ENCODE measurements at regions of chr19 and their contacts with region 1.

Region 1: DNA sequence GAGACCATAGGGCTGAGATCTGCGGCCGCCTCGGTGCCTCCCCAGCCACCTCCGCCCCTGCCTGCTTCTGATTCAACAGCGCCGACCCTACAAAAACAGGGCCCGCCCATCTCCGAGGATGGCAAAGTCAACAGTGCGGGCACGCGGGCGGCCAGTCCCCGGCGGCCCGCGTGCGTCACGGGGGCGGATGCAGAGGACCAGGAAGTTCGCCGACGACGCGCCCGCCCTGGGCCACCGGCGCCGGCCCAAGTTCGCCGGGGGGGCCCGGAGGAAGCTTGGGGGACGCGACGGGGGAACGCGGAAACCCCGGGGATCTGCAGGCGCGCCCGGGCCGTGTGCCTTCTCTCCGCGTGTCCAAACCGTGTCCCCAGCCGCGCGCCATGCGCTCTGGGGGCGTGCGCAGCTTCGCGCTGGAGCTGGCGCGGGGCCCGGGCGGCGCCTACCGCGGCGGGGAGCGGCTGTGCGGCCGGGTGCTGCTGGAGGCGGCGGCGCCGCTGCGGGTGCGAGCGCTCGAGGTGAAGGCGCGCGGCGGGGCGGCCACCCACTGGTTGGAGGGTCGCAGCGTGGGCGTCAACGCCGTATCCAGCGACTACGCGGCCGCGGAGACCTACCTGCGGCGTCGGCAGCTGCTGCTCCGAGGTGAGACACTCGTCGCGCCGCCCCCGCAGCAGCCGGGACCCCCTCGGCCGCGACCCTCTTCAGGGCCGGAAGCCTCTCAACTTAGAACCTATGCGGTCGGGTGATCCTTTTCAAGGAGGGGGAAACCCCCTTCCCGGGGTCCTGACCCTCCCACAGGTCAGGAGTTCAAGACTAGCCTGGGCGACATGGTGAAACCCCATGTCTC is 6.8 kb upstream of the ARRDC2 start:
- DNase-seq: peak; percentile 82
- H3K4me3 ChIP-seq: peak overlapping the region; percentile 73 to 85 (median 77)
- H3K27ac ChIP-seq: peak overlapping the region; percentile 90
- H3K4me1 ChIP-seq: peaks cover 15% of the 10 kb centered on the region
- H3K27me3 ChIP-seq: no peaks in the 10 kb centered on the region
- CTCF ChIP-seq: no peak
- POLR2A ChIP-seq: peak; percentile 66

Region 2: DNA sequence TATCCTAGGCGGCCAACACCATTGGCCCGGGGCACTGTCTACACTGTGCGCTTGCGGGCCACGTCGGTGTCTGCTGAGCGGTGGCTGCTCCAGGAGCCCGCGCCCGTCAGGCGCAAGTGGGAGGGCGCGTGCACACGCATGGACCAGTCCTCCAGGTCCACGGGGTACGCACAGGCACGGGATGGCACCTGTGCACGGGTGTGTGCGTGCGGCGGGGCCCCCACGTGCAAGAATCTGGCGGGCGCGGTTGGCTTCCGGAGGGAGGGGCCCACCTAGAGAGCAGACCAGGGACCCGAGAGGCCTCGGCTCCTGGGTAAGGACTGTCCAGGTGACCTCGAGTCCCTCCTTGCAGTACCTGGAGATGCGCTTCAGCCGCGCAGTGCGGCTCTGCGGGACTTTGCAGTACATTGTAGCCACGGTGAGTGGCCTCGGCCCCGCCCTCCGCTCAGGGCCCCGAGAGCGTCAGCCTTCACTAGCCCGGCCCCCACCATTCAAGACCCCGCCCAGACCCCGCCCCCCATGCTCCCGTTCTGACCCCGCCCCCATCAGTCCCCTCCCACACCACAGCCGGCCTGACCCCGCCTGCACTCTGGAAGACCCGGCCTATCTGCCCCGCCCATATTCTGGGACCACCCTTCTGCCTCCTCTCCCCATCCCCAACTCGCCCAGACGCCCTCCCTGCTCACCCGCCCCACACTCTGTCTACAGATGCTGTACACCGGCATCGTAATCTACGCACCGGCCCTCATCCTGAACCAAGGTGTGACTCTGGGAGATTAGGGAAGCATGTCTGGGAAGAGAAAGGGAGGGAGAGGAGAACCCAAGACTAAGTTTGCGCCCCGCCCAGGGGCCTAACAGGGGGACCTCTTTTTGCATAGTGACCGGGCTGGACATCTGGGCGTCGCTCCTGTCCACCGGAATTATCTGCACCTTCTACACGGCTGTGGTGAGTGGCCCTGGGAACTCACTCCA is 127.1 kb before region 1 on chr19:
- CTCF ChIA-PET with region 1: interaction called, 86 read pairs
- POLR2A ChIA-PET with region 1: no interaction called
- dilution Hi-C with region 1: no loop called
- intact Hi-C with region 1: loop called (anchors 1 kb)
- DNase-seq: no peak
- H3K4me3 ChIP-seq: no peak overlapping the region
- H3K27ac ChIP-seq: no peak overlapping the region
- H3K4me1 ChIP-seq: no peaks in the 10 kb centered on the region
- H3K27me3 ChIP-seq: peaks cover 32 to 44% of the 10 kb centered on the region in 2 experiments
- CTCF ChIP-seq: no peak
- POLR2A ChIP-seq: no peak

Region 3: GRCh38 chr19:17938092-17938845 is 62.9 kb before region 1 on chr19:
- CTCF ChIA-PET with region 1: interaction called, 203 read pairs
- POLR2A ChIA-PET with region 1: no interaction called
- dilution Hi-C with region 1: no loop called
- intact Hi-C with region 1: loop called (anchors 1 kb)
- DNase-seq: peak; percentile 64
- H3K4me3 ChIP-seq: no peak overlapping the region
- H3K27ac ChIP-seq: no peak overlapping the region
- H3K4me1 ChIP-seq: peaks cover 7% of the 10 kb centered on the region
- H3K27me3 ChIP-seq: no peaks in the 10 kb centered on the region
- CTCF ChIP-seq: peak; percentile 87 to 96
- POLR2A ChIP-seq: no peak

Region 4: DNA sequence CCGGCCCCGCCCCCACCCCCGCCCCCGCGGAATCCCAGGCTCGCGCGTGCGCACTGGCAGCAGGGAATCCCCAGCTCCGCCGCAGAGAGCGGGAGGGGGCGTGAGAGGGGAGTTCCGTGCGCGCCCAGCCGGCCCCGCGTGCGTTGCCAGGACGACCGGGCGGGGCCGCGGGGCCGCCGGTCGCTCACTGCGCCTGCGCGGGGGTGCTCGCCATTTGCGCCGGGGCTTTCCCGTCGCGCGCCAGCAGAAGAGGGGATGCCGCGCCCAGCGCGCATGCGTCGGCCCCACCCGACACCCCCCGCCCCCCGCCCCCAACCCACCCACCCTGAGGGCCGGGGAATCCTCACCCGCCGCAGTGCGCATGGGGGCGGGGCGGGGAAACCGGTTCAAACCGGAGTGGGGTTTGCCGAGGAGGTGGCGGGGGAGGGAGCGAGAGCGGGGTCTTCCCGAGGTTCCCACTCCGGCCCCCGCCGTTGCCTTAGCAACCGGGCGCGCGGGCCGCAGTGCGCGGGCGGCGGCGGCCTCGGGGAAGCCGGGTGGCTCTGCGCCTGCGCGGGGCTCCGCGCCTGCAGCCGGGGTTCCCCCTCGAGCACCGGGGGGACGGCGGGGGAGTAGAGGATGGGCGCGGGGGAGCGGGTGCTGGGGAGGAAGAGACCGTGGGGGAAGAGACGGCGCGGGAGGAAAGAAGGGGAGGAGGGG is 53.2 kb before region 1 on chr19:
- CTCF ChIA-PET with region 1: interaction called, 26 read pairs
- POLR2A ChIA-PET with region 1: no interaction called
- dilution Hi-C with region 1: no loop called
- intact Hi-C with region 1: loop called (anchors 1 kb)
- DNase-seq: peak; percentile 93
- H3K4me3 ChIP-seq: peak overlapping the region in 2 of 3 experiments; percentile 36 to 54
- H3K27ac ChIP-seq: no peak overlapping the region
- H3K4me1 ChIP-seq: peaks cover 8% of the 10 kb centered on the region
- H3K27me3 ChIP-seq: peaks cover 39 to 40% of the 10 kb centered on the region in 2 experiments
- CTCF ChIP-seq: no peak
- POLR2A ChIP-seq: no peak

Region 5: GRCh38 chr19:17957149-17957849 is 43.9 kb before region 1 on chr19:
- CTCF ChIA-PET with region 1: interaction called, 20 read pairs
- POLR2A ChIA-PET with region 1: no interaction called
- dilution Hi-C with region 1: no loop called
- intact Hi-C with region 1: no loop called
- DNase-seq: no peak
- H3K4me3 ChIP-seq: no peak overlapping the region
- H3K27ac ChIP-seq: no peak overlapping the region
- H3K4me1 ChIP-seq: no peaks in the 10 kb centered on the region
- H3K27me3 ChIP-seq: peaks cover 18 to 24% of the 10 kb centered on the region in 2 experiments
- CTCF ChIP-seq: no peak
- POLR2A ChIP-seq: no peak

Region 6: DNA sequence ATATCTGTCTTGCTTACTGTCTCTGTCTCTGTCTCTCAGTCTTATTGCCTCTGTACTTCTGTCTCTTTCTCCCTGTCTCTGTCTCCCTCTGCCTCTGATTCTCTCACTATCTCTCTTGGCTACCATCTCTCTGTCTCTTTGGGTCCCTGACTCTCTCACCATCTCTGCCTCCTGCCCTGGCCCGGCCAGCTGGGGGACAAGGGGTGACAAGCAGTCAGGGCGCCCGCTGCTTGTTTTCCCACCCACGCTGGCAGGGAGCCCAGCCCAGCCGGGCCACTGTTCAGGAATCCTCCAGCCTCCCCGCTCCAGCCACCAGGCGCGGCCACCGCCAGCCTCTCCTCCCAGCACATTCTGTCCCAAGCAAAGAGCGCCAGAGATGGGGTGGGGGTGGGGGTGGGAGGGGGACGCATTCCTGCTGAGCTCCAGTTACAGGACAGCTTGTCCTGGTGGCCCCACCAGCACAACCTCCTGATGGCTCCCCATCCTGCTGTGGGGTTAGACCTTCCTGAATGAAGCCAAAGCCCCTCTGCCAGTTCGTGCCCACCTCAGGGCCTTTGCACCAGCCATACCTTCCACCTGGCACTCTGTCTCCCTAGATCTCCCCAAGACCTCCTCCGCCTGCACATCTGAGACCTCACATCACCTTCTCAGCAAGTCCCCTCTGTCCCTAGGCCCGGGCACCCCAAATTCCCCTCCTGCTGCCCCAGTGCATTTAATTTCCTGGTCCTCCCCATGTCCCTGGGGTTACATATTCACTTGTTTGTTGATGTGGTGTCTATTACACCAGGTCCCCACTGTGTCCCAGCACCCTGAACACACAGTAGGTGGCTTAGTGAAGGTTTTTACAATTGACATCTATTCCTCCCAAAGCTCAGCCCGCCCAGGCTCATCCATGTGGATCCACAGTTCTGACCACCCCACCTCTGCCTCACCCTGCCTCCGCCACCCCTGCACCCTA is 19.2 kb after region 1 on chr19:
- CTCF ChIA-PET with region 1: no interaction called
- POLR2A ChIA-PET with region 1: no interaction called
- dilution Hi-C with region 1: no loop called
- intact Hi-C with region 1: no loop called
- DNase-seq: peak; percentile 82
- H3K4me3 ChIP-seq: no peak overlapping the region
- H3K27ac ChIP-seq: peak overlapping the region; percentile 92
- H3K4me1 ChIP-seq: peaks cover 49% of the 10 kb centered on the region
- H3K27me3 ChIP-seq: no peaks in the 10 kb centered on the region
- CTCF ChIP-seq: peak in 1 of 2 donors; percentile 4
- POLR2A ChIP-seq: no peak

Measured in endothelial cell of umbilical vein (primary cell).